Psoas muscle (tissue), 8 donors: ENCODE measurements at regions of chr17 and their contacts with region 1.

Region 1: GRCh38 chr17:39730095-39730921 is at the start of gene MIEN1:
- DNase-seq: peak; percentile 92 to 96
- ATAC-seq: peak; percentile 97 to 99 (median 98)
- H3K4me3 ChIP-seq: peak within 1 kb of the TSS; percentile 85
- H3K27ac ChIP-seq: peak within 1 kb of the TSS; percentile 89
- H3K4me1 ChIP-seq: peaks cover 8% of the 10 kb centered on the region
- H3K27me3 ChIP-seq: no peaks in the 10 kb centered on the region
- CTCF ChIP-seq: peak; percentile 92
- total RNA-seq, gene MIEN1: 28.2 to 44.3 (median 36.2) TPM

Region 2: GRCh38 chr17:39376434-39376833 is 353.9 kb before region 1 on chr17:
- intact Hi-C with region 1: no loop called
- DNase-seq: no peak
- ATAC-seq: peak in 2 of 4 donors; percentile 19 to 53
- H3K4me3 ChIP-seq: no peak overlapping the region
- H3K27ac ChIP-seq: no peak overlapping the region
- H3K4me1 ChIP-seq: peaks cover 21% of the 10 kb centered on the region
- H3K27me3 ChIP-seq: no peaks in the 10 kb centered on the region
- CTCF ChIP-seq: no peak

Region 3: GRCh38 chr17:39671651-39672521 is 58.4 kb before region 1 on chr17:
- intact Hi-C with region 1: loop called (anchors 5 kb)
- DNase-seq: peak in 1 of 2 donors; percentile 70
- ATAC-seq: peak; percentile 26 to 41 (median 32)
- H3K4me3 ChIP-seq: no peak overlapping the region
- H3K27ac ChIP-seq: peak overlapping the region; percentile 96
- H3K4me1 ChIP-seq: peaks cover 44% of the 10 kb centered on the region
- H3K27me3 ChIP-seq: no peaks in the 10 kb centered on the region
- CTCF ChIP-seq: peak; percentile 56

Region 4: DNA sequence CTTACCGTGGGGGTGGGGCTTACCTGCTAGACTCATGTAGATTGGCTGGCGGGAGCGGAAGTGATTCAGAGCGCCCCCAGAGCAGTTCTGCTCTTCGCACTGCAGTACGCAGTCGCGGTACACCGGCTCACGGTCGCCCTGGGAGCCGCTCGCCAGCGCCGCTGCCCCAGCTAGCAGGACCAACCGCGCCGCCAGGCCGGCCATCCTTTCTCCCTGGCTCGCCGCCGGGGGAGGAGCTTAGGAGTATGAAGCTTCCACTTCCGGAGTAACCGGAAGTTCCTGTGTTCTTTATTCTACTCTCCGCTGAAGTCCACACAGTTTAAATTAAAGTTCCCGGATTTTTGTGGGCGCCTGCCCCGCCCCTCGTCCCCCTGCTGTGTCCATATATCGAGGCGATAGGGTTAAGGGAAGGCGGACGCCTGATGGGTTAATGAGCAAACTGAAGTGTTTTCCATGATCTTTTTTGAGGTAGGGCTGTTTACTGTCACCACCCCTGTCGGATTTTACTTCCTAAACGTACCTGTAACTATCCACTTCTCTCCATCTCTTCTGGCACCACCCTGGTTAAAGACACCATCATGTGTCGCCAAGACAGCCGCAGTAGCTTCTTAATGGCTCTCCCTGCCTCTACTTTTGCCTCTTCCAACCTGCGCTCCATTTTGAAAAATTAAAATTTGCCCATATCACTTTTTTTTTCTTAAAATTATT is 42.3 kb before region 1 on chr17 and contains the start of gene PGAP3:
- intact Hi-C with region 1: loop called in 1 of 2 experiments (anchors 5 kb)
- DNase-seq: peak; percentile 90 to 95
- ATAC-seq: peak; percentile 96 to 97 (median 96)
- H3K4me3 ChIP-seq: peak within 1 kb of the TSS; percentile 90
- H3K27ac ChIP-seq: peak within 1 kb of the TSS; percentile 96
- H3K4me1 ChIP-seq: peaks cover 18% of the 10 kb centered on the region
- H3K27me3 ChIP-seq: no peaks in the 10 kb centered on the region
- CTCF ChIP-seq: no peak
- total RNA-seq, gene PGAP3: 4.5 to 7.9 (median 6.7) TPM